PC-9 (cell line): ENCODE measurements at regions of chr1 and their contacts with region 1.

Region 1: DNA sequence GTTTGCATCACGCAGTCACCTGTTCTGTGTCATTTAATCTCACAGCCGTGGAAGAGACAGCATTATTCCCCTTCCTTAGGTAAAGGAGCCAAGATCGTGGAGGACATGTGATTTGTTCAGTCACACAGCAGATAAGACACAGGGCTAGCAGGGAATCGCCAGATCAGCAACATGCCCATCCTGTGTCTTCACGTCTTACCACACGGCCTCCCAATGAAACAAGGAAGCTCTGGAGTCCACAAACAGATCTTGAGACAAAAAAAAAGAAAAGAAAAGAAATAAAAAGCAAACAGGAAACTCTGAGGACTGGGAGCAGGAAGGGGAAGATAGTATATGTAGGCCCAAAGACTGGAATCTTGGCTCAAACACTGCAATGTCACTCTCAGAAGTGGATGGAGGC is 155.3 kb downstream of the ADSS2 start:
- DNase-seq: no peak
- H3K4me3 ChIP-seq: no peak overlapping the region
- H3K27ac ChIP-seq: no peak overlapping the region
- H3K4me1 ChIP-seq: peaks cover 7% of the 10 kb centered on the region; the same call in 1 of the 2 replicates
- H3K27me3 ChIP-seq: no peaks in the 10 kb centered on the region
- CTCF ChIP-seq: no peak

Region 2: GRCh38 chr1:242454262-242455045 is 1842.0 kb before region 1 on chr1:
- CTCF ChIA-PET with region 1: no interaction called
- POLR2A ChIA-PET with region 1: no interaction called
- intact Hi-C with region 1: loop called (anchors 5 kb)
- DNase-seq: peak in 1 of 2 experiments; percentile 37
- H3K4me3 ChIP-seq: no peak overlapping the region
- H3K27ac ChIP-seq: no peak overlapping the region
- H3K4me1 ChIP-seq: no peaks in the 10 kb centered on the region
- H3K27me3 ChIP-seq: peaks cover 67% of the 10 kb centered on the region
- CTCF ChIP-seq: peak; percentile 70

Region 3: DNA sequence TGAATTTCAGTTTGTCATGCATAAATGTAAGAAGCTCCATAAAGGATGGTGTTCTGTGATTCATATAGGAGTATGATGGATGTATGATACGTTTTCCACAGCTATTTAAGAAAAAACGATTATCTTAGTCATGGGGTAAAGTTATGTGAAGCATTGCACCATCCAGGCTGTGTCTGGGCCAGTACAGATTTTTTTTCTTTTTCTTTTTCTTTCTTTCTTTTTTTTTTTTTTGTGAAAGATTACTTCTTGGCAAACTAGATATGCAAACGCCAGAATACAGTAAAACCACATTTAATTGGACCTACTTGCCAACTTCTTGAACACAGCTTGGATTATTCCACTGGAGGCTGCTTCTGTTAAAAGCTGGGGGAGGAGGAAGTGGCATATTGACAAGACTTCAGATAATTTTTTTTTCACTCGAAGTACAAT is 230.5 kb before region 1 on chr1:
- CTCF ChIA-PET with region 1: no interaction called
- POLR2A ChIA-PET with region 1: no interaction called
- intact Hi-C with region 1: no loop called
- DNase-seq: no peak
- H3K4me3 ChIP-seq: no peak overlapping the region
- H3K27ac ChIP-seq: no peak overlapping the region
- H3K4me1 ChIP-seq: no peaks in the 10 kb centered on the region
- H3K27me3 ChIP-seq: no peaks in the 10 kb centered on the region
- CTCF ChIP-seq: no peak